OCI-LY7 (cell line): ENCODE measurements at regions of chr20 and their contacts with region 1.

Region 1: DNA sequence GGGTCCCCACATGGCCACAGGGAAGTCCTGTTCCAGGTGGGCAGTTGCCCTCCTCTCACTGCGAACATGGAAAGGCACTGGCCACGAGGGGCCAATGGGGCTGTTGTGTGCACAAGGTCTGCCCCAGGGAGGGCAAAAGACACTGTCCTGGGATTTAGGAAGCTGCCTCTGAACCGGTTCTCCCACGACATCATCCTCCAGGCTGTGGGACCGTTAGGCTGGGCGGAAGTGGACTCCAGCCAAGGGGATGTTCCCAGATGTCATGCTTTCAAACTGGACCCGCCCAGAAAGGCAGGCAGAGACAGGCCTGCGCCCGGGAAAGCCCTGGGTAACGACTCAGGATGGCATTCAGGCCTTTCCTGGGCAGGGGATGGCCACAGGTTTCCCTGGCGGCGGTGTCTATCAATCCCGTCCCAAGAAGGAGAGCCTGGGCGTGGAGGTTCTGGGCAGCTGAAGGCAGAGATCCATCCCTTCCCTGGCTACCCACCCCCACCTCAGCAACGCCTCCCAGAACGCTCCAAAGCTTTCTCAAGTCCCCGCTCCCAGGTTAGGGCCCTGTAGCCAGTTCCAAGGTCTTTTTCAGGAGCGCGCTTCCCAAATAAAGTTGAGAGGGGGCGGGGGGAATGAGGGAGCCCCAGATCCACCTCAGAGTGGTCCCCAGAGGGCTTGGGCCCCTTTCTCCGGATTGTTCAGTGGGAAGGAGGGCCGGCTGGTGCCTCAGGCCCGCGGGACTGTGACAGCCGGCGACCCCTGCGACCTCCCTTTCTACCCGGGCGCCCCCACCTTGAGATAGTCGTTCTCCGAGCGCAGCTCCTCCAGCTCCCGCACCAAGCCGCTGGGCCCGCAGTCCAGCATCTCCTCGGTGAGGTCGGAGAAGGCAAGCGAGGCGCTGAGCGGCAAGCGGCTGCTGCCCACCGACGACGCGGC is 13.8 kb upstream of the TLDC2 start:
- DNase-seq: no peak
- H3K4me3 ChIP-seq: peak overlapping the region; percentile 28
- H3K27ac ChIP-seq: no peak overlapping the region
- H3K4me1 ChIP-seq: peaks cover 51% of the 10 kb centered on the region
- CTCF ChIP-seq: no peak

Region 2: DNA sequence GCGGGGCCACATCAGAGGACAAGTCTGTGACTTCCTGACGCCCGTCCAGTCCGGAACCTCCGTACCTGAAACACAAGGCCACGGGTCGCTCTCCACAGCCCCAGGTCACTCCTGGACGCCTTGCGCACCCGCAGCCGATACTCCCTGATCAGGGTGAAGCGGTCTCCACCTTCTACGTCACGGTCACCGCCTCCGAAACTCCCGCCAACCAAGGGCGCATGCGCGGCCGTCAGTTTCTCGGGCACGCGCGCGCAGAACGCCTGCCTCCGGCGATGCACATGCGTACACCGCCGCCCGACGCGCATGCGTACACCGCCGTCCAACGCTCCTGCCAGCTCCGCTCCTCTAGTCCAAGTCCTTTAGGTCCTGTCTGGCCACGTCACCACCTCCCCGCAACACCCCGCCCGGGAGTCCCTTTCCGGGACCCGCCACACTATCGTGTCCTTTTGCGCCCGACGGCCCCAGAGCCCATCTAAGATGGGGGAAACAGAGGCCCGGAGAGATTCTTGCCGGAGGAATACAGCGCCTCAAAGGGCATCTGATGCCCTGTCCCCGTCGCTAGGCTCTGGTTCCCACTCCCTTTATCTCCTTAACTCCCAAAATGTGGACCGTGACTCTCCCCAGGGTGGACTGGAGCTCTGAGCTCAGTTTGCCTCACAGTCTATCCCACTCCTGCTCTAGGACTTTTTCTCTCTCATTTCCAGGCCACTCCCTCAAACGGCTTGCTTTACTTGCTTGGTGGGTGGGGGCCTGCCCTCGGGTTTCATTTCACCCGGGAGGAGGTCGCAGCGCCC is 88.3 kb before region 1 on chr20 and contains the start of gene DSN1:
- CTCF ChIA-PET with region 1: no interaction called
- POLR2A ChIA-PET with region 1: interaction called, 3 read pairs
- intact Hi-C with region 1: loop called (anchors 5 kb)
- DNase-seq: peak; percentile 97
- H3K4me3 ChIP-seq: peak within 1 kb of the TSS; percentile 86
- H3K27ac ChIP-seq: peak within 1 kb of the TSS; percentile 49
- H3K4me1 ChIP-seq: peaks cover 41% of the 10 kb centered on the region
- CTCF ChIP-seq: no peak
- total RNA-seq, gene DSN1: 37.6 and 38.3 TPM in 2 replicates

Region 3: DNA sequence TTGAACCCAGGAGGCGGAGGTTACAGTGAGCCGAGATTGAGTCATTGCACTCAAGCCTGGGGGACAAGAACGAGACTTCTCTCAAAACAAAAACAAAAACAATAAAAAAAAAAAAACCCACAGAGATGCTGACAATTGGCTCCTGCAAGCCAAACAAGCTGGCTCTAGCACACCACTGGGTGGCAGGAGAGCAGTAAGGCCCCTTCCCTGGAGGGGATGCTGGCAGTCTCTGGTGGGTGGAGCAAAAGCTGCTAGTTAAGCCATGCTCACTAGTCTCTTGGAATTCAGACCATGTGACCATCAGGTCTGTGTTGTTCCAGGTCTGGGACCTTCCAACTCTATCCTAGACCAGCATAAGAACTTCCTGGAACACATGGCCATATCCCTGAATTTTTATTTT is 69.7 kb before region 1 on chr20:
- CTCF ChIA-PET with region 1: no interaction called
- POLR2A ChIA-PET with region 1: no interaction called
- intact Hi-C with region 1: loop called (anchors 1 kb)
- DNase-seq: peak; percentile 83
- H3K4me3 ChIP-seq: no peak overlapping the region
- H3K27ac ChIP-seq: peak overlapping the region; percentile 40
- H3K4me1 ChIP-seq: peaks cover 20% of the 10 kb centered on the region
- CTCF ChIP-seq: peak; percentile 81

Region 4: GRCh38 chr20:36847009-36847709 is 15.0 kb before region 1 on chr20:
- CTCF ChIA-PET with region 1: interaction called, 10 read pairs
- POLR2A ChIA-PET with region 1: interaction called, 15 read pairs
- intact Hi-C with region 1: no loop called
- DNase-seq: no peak
- H3K4me3 ChIP-seq: no peak overlapping the region
- H3K27ac ChIP-seq: peak overlapping the region; percentile 93
- H3K4me1 ChIP-seq: peaks cover 89% of the 10 kb centered on the region
- CTCF ChIP-seq: no peak